Activated CD4-positive, alpha-beta memory T cell treated with anti-CD3 and anti-CD28 coated beads, Interleukin-2, amount 10 ng/mL, durations not matched to agents 7 days and 5 days (primary cell): ENCODE measurements at regions of chr17 and their contacts with region 1.

Region 1: DNA sequence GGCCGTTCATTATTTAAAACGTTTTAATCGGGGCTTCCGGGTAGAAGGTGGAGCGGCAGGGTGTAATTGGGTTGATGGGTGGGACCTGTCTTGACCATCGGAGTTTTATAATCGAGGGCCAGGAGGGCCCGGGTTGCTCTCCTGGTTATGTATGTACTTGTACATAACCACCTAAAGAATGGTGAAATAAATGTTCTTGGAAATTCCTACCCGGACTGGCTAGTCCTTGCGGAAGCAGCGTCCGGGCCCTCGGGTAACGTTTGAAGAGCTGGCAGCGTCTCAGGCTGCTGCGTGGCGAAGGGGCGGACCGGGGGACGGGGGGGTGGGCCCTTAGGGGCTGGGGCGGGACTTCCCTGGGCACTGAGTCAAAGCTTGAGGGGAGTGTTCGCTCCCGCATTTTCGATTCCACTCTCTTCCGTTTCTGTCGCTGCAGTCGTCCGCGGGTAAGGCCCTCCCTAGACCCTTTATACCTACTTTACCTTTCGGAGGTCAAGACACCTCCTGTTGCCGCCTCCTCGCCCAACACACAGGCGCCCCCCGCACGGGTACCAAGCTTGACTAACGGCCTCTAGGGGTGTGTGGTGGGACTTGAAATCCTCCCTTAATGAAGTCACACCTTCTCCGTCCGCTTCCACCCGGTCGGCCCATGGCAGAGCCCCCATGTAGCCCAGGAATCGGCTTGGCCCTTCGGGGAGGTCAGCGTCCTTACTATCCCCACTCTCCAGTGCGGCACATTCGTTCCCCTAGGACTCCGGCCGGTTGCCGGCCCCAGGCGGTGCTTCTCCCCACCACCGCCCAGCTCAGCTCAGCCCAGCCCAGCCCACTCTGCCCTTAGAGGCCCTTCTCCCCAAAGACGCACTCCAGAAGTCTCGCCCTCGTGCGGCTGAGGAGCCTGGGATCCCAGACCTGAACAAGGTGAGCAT is at the start of gene TMEM106A:
- DNase-seq: peak; percentile 80
- H3K4me3 Mint-ChIP-seq: peak within 1 kb of the TSS; percentile 81
- H3K27ac Mint-ChIP-seq: peak within 1 kb of the TSS; percentile 82
- H3K4me1 Mint-ChIP-seq: peaks cover 31% of the 10 kb centered on the region
- H3K27me3 Mint-ChIP-seq: no peaks in the 10 kb centered on the region
- total RNA-seq, gene TMEM106A: 12.9 to 13.8 TPM

Region 2: GRCh38 chr17:43068570-43069367 is 143.0 kb before region 1 on chr17:
- CTCF ChIA-PET with region 1: no interaction called
- POLR2A ChIA-PET with region 1: no interaction called
- DNase-seq: no peak
- H3K4me3 Mint-ChIP-seq: no peak overlapping the region
- H3K27ac Mint-ChIP-seq: no peak overlapping the region
- H3K4me1 Mint-ChIP-seq: no peaks in the 10 kb centered on the region
- H3K27me3 Mint-ChIP-seq: no peaks in the 10 kb centered on the region

Region 3: GRCh38 chr17:43125133-43125966 is 86.4 kb before region 1 on chr17 and contains the start of gene BRCA1:
- CTCF ChIA-PET with region 1: interaction called, 4 read pairs
- POLR2A ChIA-PET with region 1: interaction called, 24 read pairs
- DNase-seq: peak; percentile 96
- H3K4me3 Mint-ChIP-seq: peak within 1 kb of the TSS; percentile 100
- H3K27ac Mint-ChIP-seq: peak within 1 kb of the TSS; percentile 91
- H3K4me1 Mint-ChIP-seq: peaks cover 38% of the 10 kb centered on the region
- H3K27me3 Mint-ChIP-seq: no peaks in the 10 kb centered on the region
- total RNA-seq, gene BRCA1: 62.5 to 66.5 TPM

Region 4: DNA sequence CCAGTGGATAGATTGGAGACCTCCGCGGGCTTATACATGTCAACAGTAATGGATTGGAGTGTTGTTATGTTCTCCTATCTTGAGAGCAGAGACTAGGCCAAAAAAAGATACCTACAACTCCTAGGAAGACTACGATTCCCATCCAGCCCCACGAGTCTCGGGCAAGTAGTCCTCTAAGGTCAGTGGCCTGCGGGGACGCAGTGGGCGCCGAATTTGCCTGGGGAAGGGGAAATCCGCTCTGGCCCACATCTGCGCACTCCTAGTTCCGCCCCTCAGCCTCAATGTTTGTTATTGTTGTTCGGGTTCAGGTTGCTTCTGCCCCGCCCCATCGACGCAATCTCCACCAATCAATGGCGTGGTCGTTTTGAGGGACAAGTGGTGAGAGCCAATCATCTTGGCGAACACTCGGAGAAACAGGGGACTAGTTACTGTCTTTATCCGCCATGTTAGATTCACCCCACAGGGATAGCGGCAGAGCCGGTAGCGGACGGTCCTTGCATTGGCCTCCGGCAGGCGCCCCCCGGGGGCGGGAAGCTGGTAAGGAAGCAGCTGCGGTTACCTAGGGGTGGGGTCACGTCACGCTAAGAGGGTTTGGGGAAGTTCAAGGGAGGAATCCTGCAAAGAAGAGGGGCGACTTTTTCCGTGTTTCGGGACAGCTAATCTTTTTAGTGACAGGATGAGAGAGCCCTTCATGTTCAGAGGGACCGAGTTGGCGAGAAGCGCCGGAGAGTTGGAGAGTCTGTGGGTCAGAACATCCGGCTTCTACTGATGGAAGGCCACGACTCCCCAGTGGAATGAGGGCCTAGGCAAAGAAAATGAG is 40.8 kb before region 1 on chr17 and contains the start of gene NBR1:
- CTCF ChIA-PET with region 1: no interaction called
- POLR2A ChIA-PET with region 1: interaction called, 39 read pairs
- DNase-seq: peak; percentile 98
- H3K4me3 Mint-ChIP-seq: no peak within 1 kb of the TSS
- H3K27ac Mint-ChIP-seq: no peak within 1 kb of the TSS
- H3K4me1 Mint-ChIP-seq: peaks cover 39% of the 10 kb centered on the region
- H3K27me3 Mint-ChIP-seq: no peaks in the 10 kb centered on the region
- total RNA-seq, gene NBR1: 68.1 to 69.8 TPM

Region 5: GRCh38 chr17:43200127-43200526 is 11.6 kb before region 1 on chr17:
- CTCF ChIA-PET with region 1: interaction called, 16 read pairs
- POLR2A ChIA-PET with region 1: interaction called, 37 read pairs
- DNase-seq: no peak
- H3K4me3 Mint-ChIP-seq: no peak overlapping the region
- H3K27ac Mint-ChIP-seq: no peak overlapping the region
- H3K4me1 Mint-ChIP-seq: peaks cover 3% of the 10 kb centered on the region
- H3K27me3 Mint-ChIP-seq: no peaks in the 10 kb centered on the region

Region 6: GRCh38 chr17:43224146-43224695 is 12.5 kb after region 1 on chr17:
- CTCF ChIA-PET with region 1: no interaction called
- POLR2A ChIA-PET with region 1: interaction called, 10 read pairs
- DNase-seq: no peak
- H3K4me3 Mint-ChIP-seq: no peak overlapping the region
- H3K27ac Mint-ChIP-seq: no peak overlapping the region
- H3K4me1 Mint-ChIP-seq: peaks cover 3% of the 10 kb centered on the region
- H3K27me3 Mint-ChIP-seq: no peaks in the 10 kb centered on the region